Natural killer cell (primary cell): ENCODE measurements at regions of chr11 and their contacts with region 1.

Region 1: DNA sequence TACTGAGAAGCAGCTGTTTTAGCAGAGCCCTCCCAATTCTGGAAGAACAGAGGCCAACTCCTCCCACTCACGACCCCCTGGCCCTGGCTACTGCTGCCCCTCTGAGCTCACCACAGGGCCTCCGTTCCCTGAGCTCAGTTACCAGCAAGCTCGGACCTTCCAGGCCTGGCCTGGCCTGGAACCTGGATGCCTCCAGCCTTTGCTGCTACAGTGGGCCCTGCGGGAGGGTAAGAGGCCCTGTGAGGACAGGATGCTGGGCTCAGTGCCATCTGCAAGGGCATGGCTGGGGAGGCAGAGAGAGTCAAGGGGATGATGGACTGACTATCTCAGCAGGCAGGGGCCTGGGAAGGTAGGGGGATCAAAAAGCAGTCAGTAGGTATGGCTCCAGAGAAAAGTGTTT is 209.9 kb upstream of the NCAM1 start:
- DNase-seq: no peak
- ATAC-seq: no peak
- H3K4me3 ChIP-seq: no peak overlapping the region
- H3K4me3 Mint-ChIP-seq: no peak overlapping the region
- H3K27ac ChIP-seq: no peak overlapping the region
- H3K27ac Mint-ChIP-seq: no peak overlapping the region
- H3K4me1 ChIP-seq: no peaks in the 10 kb centered on the region
- H3K4me1 Mint-ChIP-seq: peaks cover under 1% of the 10 kb centered on the region in 2 donors
- H3K27me3 ChIP-seq: no peaks in the 10 kb centered on the region
- H3K27me3 Mint-ChIP-seq: peaks cover 24 to 39% of the 10 kb centered on the region in 2 donors
- CTCF ChIP-seq: no peak

Region 2: GRCh38 chr11:111992206-111992855 is 759.0 kb before region 1 on chr11:
- intact Hi-C with region 1: no loop called
- DNase-seq: no peak
- ATAC-seq: no peak
- H3K4me3 ChIP-seq: no peak overlapping the region
- H3K4me3 Mint-ChIP-seq: no peak overlapping the region
- H3K27ac ChIP-seq: no peak overlapping the region
- H3K27ac Mint-ChIP-seq: no peak overlapping the region
- H3K4me1 ChIP-seq: no peaks in the 10 kb centered on the region
- H3K4me1 Mint-ChIP-seq: no peaks in the 10 kb centered on the region
- H3K27me3 ChIP-seq: no peaks in the 10 kb centered on the region
- H3K27me3 Mint-ChIP-seq: no peaks in the 10 kb centered on the region
- CTCF ChIP-seq: no peak

Region 3: GRCh38 chr11:112265721-112266409 is 485.5 kb before region 1 on chr11:
- intact Hi-C with region 1: no loop called
- DNase-seq: no peak
- ATAC-seq: no peak
- H3K4me3 ChIP-seq: no peak overlapping the region
- H3K4me3 Mint-ChIP-seq: no peak overlapping the region
- H3K27ac ChIP-seq: no peak overlapping the region
- H3K27ac Mint-ChIP-seq: no peak overlapping the region
- H3K4me1 ChIP-seq: no peaks in the 10 kb centered on the region
- H3K4me1 Mint-ChIP-seq: no peaks in the 10 kb centered on the region
- H3K27me3 ChIP-seq: no peaks in the 10 kb centered on the region
- H3K27me3 Mint-ChIP-seq: no peaks in the 10 kb centered on the region
- CTCF ChIP-seq: no peak

Region 4: GRCh38 chr11:112459001-112459400 is 292.3 kb before region 1 on chr11:
- intact Hi-C with region 1: no loop called
- DNase-seq: no peak
- ATAC-seq: no peak
- H3K4me3 ChIP-seq: no peak overlapping the region
- H3K4me3 Mint-ChIP-seq: no peak overlapping the region
- H3K27ac ChIP-seq: no peak overlapping the region
- H3K27ac Mint-ChIP-seq: no peak overlapping the region
- H3K4me1 ChIP-seq: no peaks in the 10 kb centered on the region
- H3K4me1 Mint-ChIP-seq: no peaks in the 10 kb centered on the region
- H3K27me3 ChIP-seq: peaks cover 2% of the 10 kb centered on the region
- H3K27me3 Mint-ChIP-seq: peaks cover 6 to 13% of the 10 kb centered on the region in 2 donors
- CTCF ChIP-seq: no peak

Region 5: DNA sequence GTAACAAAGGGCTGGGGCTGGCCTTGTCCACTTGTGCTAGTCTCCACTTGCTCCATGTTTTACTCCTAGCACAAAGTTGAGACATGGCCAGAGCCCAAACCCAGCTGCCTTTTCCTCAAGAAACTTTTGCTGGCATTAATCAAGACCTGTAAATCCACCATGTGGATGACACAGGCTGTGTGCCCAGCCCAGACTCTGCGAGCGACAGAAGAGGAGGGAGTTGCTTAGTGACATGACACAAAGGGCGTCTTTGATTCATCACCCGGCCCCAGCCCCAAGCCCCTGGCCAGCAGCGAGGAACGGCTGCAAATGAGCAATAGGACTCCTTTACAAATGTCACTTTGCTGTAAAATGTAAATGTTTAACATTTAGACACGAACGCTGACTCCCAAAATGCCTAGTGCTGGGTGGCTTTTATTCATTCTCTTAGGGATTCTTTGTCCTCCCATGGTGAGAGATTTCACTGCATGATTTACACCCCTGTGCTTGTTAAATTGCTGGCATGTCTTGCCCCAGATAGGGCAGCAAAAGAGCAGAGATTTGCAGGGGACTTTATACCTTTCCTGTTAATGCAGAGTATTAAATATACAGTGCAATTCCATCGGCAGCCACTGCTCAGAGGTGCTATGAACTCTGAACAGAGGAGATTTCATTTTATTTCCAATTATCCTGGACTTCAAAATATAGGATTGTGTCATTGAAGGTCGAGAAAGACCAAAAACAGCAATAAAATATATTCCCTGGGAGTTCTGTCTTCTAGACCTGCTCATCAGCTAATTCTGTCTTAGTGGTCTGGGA is 53.7 kb before region 1 on chr11:
- intact Hi-C with region 1: loop called (anchors 10 kb)
- DNase-seq: no peak
- ATAC-seq: no peak
- H3K4me3 ChIP-seq: no peak overlapping the region
- H3K4me3 Mint-ChIP-seq: no peak overlapping the region
- H3K27ac ChIP-seq: no peak overlapping the region
- H3K27ac Mint-ChIP-seq: no peak overlapping the region
- H3K4me1 ChIP-seq: no peaks in the 10 kb centered on the region
- H3K4me1 Mint-ChIP-seq: no peaks in the 10 kb centered on the region
- H3K27me3 ChIP-seq: peaks cover 5% of the 10 kb centered on the region
- H3K27me3 Mint-ChIP-seq: peaks cover 13 to 20% of the 10 kb centered on the region in 2 donors
- CTCF ChIP-seq: no peak